ENCODE measurements at regions of chr17 and their contacts with region 1.

Region 1: GRCh38 chr17:8125157-8125946 is 1.4 kb upstream of the HES7 start:
- DNase-seq: peak; percentile 81
- H3K4me3 Mint-ChIP-seq: peak overlapping the region; percentile 91
- H3K27ac Mint-ChIP-seq: peak overlapping the region; percentile 94
- H3K4me1 Mint-ChIP-seq: peaks cover 50% of the 10 kb centered on the region
- H3K27me3 Mint-ChIP-seq: peaks cover 77% of the 10 kb centered on the region
- CTCF ChIP-seq: no peak

Region 2: DNA sequence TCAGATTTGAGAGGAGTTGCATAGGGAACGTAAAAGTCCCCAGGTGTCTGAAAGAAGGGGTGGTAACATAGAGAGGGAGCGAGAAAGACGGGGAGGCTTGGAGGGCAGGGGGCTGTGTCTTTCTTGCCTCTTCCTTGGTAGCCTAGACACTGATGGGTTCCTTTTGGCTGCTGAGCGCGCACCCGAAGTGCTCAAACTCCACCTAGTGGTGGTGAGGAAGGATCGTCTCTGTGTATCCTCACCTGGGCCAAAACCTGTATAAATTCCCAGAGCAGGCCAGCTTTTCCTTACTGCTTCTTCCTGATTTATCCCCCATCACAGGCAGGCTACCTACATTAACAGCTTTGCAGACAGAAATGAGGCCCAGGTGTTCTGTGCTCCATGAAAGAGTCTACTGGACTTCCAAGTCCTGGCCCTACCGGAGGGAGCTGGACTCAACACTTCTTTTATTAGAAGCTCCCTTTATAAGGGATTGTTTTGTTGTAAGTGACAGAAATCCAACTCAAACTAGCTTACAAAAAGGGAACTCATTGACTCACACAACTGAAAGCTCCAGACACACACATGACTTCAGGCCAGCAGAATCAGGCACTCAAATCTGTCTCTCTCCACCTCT is 175.4 kb after region 1 on chr17:
- CTCF ChIA-PET with region 1: no interaction called
- intact Hi-C with region 1: loop called (anchors 2 kb)
- DNase-seq: peak; percentile 41
- H3K4me3 Mint-ChIP-seq: no peak overlapping the region
- H3K27ac Mint-ChIP-seq: no peak overlapping the region
- H3K4me1 Mint-ChIP-seq: peaks cover 9% of the 10 kb centered on the region
- H3K27me3 Mint-ChIP-seq: no peaks in the 10 kb centered on the region
- CTCF ChIP-seq: peak; percentile 79

Measured in Calu3 (cell line).